Activated B cell treated with CpG ODN at 0.5 μM for 24 hours (primary cell): ENCODE measurements at regions of chrX and their contacts with region 1.

Region 1: DNA sequence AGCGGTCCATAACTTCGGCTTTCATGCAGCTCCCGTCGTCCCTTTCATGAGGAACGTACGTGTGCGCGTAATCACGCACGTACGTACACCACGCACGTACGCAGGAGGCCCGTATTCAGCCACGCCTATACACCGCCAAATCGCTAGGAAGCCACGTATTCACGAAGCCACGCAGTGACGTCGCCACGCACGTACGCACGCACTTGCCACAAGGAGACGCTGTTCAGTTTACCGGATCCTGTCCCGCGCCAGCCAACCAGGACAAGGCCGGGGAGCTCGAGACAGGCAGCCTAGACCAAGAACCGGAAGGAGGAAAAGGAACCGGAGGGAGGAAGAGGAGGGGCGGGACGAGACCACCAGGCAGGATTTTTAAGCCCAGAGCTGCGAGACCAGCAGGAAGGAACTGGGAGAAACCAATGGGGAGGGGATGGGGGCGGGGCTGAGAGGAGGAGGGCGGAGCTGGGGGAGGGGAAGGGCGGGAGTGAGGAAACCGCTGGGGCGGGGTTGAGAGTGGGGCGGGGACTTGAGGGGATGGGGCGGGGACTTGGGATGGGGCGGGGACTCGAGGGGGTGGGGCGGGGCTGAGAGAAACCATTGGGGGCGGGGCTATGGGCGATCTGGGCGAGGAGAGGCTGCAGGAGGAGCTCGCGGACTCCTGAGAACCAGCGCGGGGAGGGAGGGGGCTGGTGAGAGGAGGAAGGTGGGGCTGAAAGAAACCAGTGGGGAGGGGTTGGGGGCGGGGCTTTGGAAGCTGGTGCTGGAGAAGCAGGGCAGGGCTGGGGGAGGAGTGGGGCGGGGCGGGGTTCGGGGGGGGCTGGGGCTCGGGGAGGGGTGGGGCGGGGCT is at the start of gene EOLA2:
- DNase-seq: peak; percentile 79
- ATAC-seq: peak; percentile 53
- H3K4me3 Mint-ChIP-seq: peak within 1 kb of the TSS; percentile 85
- H3K27ac Mint-ChIP-seq: peak within 1 kb of the TSS; percentile 93
- H3K4me1 Mint-ChIP-seq: peaks cover 10% of the 10 kb centered on the region
- H3K27me3 Mint-ChIP-seq: no peaks in the 10 kb centered on the region
- CTCF ChIP-seq: no peak
- total RNA-seq, gene EOLA2: 37.5 and 38.4 TPM in 2 replicates

Region 2: DNA sequence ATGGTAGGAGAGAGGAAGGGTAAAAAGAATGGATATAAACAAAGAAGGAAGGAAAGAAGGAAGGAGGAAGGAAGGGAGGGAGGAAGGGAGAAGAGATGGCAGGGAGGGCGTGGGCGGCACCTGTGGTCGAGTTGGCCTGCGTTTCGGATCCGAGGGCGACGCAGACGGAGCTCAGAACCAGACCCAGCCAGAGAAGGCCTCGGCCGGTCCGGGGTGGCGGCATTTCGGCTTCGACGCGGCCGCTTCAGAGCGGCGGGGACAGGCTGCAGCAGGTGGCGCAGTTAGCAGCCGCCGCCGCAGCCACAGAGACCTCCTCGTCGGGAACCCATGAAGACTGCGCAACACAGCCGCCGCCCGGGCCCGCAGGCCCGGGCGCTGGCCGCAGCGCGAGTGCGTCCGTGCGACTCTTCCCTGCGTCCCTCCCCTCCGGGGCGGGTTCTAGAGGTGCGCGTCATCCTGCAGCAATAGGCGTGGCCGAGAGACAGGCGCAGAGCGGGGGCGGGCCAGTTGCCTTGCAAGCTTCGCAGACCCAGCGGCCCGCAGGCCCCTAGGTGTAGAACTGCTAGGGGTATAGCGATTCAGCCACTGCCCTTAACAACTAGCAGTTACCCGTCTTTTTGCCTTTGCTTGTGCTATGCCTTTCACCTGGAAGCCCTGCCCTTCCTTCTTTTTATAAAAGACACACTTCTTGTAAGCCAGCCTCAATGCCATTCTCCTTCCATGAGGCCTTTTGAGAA is 433.6 kb before region 1 on chrX and contains the start of gene IDS:
- CTCF ChIA-PET with region 1: no interaction called
- POLR2A ChIA-PET with region 1: interaction called, 17 read pairs
- intact Hi-C with region 1: no loop called
- DNase-seq: peak; percentile 75
- ATAC-seq: peak; percentile 71
- H3K4me3 Mint-ChIP-seq: peak within 1 kb of the TSS; percentile 89
- H3K27ac Mint-ChIP-seq: peak within 1 kb of the TSS; percentile 96
- H3K4me1 Mint-ChIP-seq: peaks cover 10% of the 10 kb centered on the region
- H3K27me3 Mint-ChIP-seq: no peaks in the 10 kb centered on the region
- CTCF ChIP-seq: no peak
- total RNA-seq, gene IDS: 88.4 and 99.1 TPM in 2 replicates

Region 3: GRCh38 chrX:149631234-149632165 is 307.1 kb before region 1 on chrX and contains the start of gene TMEM185A:
- CTCF ChIA-PET with region 1: no interaction called
- POLR2A ChIA-PET with region 1: no interaction called
- intact Hi-C with region 1: loop called (anchors 5 kb)
- DNase-seq: peak; percentile 64
- ATAC-seq: peak; percentile 95
- H3K4me3 Mint-ChIP-seq: peak within 1 kb of the TSS; percentile 89
- H3K27ac Mint-ChIP-seq: peak within 1 kb of the TSS; percentile 68
- H3K4me1 Mint-ChIP-seq: peaks cover 26% of the 10 kb centered on the region
- H3K27me3 Mint-ChIP-seq: peaks cover under 1% of the 10 kb centered on the region
- CTCF ChIP-seq: no peak
- total RNA-seq, gene TMEM185A: 17.4 and 19.1 TPM in 2 replicates

Region 4: DNA sequence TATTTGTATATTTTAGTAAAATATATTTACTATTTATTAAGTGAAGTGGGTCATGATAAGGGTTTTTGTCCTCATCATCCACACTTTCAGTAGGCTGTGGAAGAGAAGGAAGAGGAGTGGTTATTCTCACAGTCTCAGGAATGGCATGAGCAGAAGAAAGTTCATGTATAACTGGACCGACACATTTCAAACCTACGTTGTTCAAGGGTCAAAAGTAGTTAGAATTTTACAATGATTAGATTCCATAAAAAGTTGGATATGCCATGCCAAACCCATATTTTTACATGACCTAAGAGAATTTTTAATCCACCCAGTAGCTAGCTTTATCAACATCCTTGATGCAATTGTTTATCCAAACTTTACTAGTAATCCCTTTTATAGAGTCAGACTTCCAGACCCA is 73.3 kb before region 1 on chrX:
- CTCF ChIA-PET with region 1: no interaction called
- POLR2A ChIA-PET with region 1: no interaction called
- intact Hi-C with region 1: no loop called
- DNase-seq: no peak
- ATAC-seq: no peak
- H3K4me3 Mint-ChIP-seq: no peak overlapping the region
- H3K27ac Mint-ChIP-seq: no peak overlapping the region
- H3K4me1 Mint-ChIP-seq: no peaks in the 10 kb centered on the region
- H3K27me3 Mint-ChIP-seq: no peaks in the 10 kb centered on the region
- CTCF ChIP-seq: no peak

Region 5: DNA sequence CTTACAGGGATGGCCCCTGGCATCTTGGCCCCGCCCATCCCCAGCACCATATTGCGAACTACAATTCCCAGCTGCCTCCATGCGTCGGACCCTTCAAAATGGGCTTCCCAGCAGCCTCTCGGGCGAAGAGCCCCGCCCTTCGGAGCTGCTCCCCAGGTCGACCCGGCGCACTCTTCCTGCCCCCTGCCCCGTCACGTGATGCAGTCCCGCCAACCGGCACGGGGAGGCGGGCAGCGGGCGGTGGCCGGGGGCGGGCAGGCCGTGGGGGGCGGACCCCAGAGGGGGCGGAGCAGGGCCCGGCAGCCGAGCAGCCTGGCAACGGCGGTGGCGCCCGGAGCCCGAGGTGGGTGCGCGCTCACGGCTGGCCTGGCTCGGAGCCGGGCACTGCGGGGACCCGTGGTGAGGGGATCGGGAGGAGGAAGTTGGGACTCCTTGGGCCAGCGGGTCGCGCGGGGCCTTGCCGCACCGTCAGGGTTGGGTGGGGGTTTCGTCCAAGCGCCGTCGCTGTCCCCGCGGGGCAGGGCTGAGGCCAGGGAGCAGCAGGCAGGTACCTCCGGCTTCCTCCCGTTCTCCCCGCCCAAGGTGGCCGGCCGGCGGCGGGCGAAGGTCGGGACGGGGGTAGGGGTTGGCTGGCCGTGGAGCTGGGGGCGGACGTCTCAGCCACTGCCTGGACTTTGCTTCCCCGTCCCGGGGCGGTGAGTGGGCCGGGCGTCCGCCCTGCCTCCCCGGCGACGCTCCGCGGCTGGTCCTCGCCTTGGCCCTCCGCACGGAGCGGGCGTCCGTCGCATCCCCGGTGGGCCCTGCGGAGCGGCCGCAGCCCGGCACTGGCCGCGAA is 629.9 kb after region 1 on chrX and contains the start of gene MTM1:
- CTCF ChIA-PET with region 1: no interaction called
- POLR2A ChIA-PET with region 1: interaction called, 18 read pairs
- intact Hi-C with region 1: loop called (anchors 2 kb)
- DNase-seq: peak; percentile 86
- ATAC-seq: peak; percentile 86
- H3K4me3 Mint-ChIP-seq: peak within 1 kb of the TSS; percentile 86
- H3K27ac Mint-ChIP-seq: peak within 1 kb of the TSS; percentile 89
- H3K4me1 Mint-ChIP-seq: peaks cover 45% of the 10 kb centered on the region
- H3K27me3 Mint-ChIP-seq: no peaks in the 10 kb centered on the region
- CTCF ChIP-seq: no peak
- total RNA-seq, gene MTM1: 22.0 and 24.4 TPM in 2 replicates

Region 6: DNA sequence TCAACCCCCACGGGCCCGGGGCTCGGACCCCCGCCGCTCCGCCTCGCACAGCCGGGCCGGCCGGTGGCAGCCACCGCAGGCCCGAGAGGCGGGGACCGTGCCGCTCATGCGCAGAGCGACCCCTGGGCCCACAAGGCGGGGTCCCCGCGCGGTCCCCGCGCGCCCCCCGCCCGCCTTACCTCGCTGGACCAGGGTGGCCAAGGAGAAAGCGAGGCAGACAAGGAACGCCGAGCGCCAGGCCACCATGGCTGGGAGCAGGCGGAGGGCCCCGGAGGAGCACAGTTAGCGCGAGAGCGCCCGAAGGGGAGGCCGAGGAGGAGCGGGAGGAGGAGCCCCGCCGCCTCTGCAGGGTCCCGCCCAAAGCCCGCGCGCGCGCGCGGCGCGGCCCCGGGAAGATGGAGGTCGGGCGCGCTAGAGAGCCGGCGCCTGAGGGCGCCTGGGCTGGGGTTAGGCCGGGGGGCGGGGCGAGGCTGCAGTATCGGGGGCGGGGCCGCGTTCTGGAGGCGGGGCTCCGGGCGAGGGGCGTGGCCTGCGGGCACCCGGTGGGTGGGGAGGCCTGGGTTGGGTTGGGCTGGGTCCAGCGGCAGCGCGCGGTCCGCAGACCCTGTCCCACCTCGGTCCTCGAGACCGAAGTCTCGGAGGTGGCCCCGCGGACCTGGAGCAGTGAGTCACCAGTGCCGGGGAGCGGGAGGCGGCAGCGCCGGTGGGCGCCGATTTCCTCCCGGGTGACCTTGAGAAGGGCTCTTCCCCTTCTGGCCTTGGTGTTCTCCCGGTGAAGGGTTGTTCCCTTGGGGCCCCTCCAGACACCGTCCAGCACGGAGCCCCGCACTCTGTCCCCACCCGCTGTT is 959.9 kb after region 1 on chrX and contains the start of gene CD99L2:
- CTCF ChIA-PET with region 1: no interaction called
- POLR2A ChIA-PET with region 1: no interaction called
- intact Hi-C with region 1: loop called (anchors 2 kb)
- DNase-seq: peak; percentile 84
- ATAC-seq: peak; percentile 91
- H3K4me3 Mint-ChIP-seq: peak within 1 kb of the TSS; percentile 90
- H3K27ac Mint-ChIP-seq: peak within 1 kb of the TSS; percentile 69
- H3K4me1 Mint-ChIP-seq: peaks cover 2% of the 10 kb centered on the region
- H3K27me3 Mint-ChIP-seq: peaks cover 6% of the 10 kb centered on the region
- CTCF ChIP-seq: no peak
- total RNA-seq, gene CD99L2: 12.5 and 12.7 TPM in 2 replicates

Region 7: GRCh38 chrX:151396825-151397740 is 1458.4 kb after region 1 on chrX and contains the start of gene VMA21:
- CTCF ChIA-PET with region 1: no interaction called
- POLR2A ChIA-PET with region 1: interaction called, 4 read pairs
- intact Hi-C with region 1: loop called (anchors 5 kb)
- DNase-seq: peak; percentile 79
- ATAC-seq: peak; percentile 87
- H3K4me3 Mint-ChIP-seq: peak within 1 kb of the TSS; percentile 87
- H3K27ac Mint-ChIP-seq: peak within 1 kb of the TSS; percentile 95
- H3K4me1 Mint-ChIP-seq: peaks cover 43% of the 10 kb centered on the region
- H3K27me3 Mint-ChIP-seq: no peaks in the 10 kb centered on the region
- CTCF ChIP-seq: no peak
- total RNA-seq, gene VMA21: 26.1 and 26.5 TPM in 2 replicates